PC-9 (cell line): ENCODE measurements at regions of chr2 and their contacts with region 1.

Region 1: GRCh38 chr2:113831161-113831560 is 58.7 kb upstream of the ACTR3 start:
- DNase-seq: peak; percentile 71 to 93
- H3K4me3 ChIP-seq: no peak overlapping the region
- H3K27ac ChIP-seq: peak overlapping the region; percentile 80
- H3K4me1 ChIP-seq: peaks cover 10% of the 10 kb centered on the region
- H3K27me3 ChIP-seq: no peaks in the 10 kb centered on the region
- CTCF ChIP-seq: no peak

Region 2: DNA sequence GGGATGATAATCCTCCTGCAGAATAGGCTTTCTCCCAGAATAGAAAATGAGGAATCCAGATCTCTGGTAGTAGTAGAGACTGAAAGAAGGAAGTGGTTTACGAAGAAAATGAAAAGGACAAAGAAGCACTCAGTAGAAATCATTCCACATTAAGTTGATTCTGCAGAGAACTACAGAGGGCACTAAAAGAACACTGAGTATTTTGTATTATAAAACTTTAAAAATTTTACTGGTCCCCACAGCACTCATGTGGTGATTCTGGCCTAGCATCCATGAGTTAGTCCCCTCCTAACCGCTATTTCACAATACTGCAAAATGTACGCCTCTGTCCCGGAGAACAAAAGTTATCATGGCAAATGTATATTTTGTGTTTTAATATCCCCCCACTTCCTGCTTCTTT is 31.8 kb before region 1 on chr2:
- CTCF ChIA-PET with region 1: no interaction called
- POLR2A ChIA-PET with region 1: interaction called, 13 read pairs
- intact Hi-C with region 1: no loop called
- DNase-seq: no peak
- H3K4me3 ChIP-seq: no peak overlapping the region
- H3K27ac ChIP-seq: no peak overlapping the region
- H3K4me1 ChIP-seq: no peaks in the 10 kb centered on the region
- H3K27me3 ChIP-seq: no peaks in the 10 kb centered on the region
- CTCF ChIP-seq: 0 out of 2 replicates have a peak, but pooled peaks have one; percentile 15

Region 3: DNA sequence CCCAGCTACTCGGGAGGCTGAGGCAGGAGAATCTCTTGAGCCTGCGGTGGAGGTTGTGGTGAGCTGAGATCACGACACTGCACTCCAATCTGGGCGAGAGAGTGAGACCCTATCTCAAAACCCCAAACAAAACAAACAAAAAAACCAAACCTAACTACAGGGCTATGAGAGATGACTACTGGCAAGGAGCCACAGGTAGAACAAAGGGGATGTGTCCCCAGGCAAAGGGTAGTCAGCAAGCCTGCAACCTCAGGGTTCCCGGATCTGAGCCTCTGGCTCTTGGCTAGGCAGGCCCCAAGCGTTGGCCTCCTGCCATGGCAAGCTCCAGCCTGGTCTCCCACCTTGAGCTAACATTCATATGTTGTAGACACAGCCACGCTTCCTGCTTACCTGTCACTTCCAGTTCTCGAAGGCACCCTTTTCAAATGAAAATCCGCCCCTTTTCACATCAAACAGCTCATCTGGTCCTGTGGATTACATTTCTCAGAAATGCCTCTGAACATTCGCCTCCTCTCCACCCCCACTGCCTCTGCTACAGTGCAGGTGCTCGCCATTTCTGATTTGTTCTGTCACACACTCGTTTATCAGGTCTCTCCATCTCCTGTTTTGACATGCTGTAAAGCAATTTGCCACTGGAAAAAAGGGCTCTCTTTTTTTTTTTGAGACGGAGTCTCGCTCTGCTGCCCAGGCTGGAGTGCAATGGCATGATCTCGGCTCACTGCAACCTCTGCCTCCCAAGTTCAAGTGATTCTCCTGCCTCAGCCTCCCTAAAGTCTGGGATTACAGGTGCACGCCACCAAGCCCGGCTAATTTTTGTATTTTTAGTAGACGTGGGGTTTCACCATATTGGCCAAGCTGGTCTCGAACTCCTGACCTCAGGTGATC is 45.6 kb after region 1 on chr2:
- CTCF ChIA-PET with region 1: no interaction called
- POLR2A ChIA-PET with region 1: no interaction called
- intact Hi-C with region 1: loop called (anchors 2 kb)
- DNase-seq: peak; percentile 94 to 95
- H3K4me3 ChIP-seq: no peak overlapping the region
- H3K27ac ChIP-seq: no peak overlapping the region
- H3K4me1 ChIP-seq: peaks cover 34% of the 10 kb centered on the region
- H3K27me3 ChIP-seq: no peaks in the 10 kb centered on the region
- CTCF ChIP-seq: no peak

Region 4: DNA sequence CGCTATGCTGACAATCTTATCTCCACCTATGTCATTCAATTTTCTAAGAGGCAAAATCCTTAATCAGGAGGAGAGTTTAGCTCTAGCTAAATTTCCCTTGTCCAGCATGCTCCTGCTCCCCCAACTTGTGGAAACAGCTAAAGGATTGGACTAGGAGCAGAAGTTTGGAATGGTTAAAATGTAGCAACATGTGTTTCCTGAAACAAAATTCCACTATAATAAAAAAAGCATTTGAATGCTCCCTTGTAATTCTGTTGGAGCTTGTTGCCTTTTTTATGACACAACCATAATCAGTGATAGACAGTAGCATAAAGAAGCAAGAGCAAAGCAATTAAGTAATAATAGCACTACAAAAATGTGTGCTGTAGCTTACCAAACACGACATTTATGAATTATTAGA is 65.6 kb after region 1 on chr2:
- CTCF ChIA-PET with region 1: no interaction called
- POLR2A ChIA-PET with region 1: interaction called, 12 read pairs
- intact Hi-C with region 1: loop called (anchors 1 kb)
- DNase-seq: no peak
- H3K4me3 ChIP-seq: no peak overlapping the region
- H3K27ac ChIP-seq: no peak overlapping the region
- H3K4me1 ChIP-seq: peaks cover 34% of the 10 kb centered on the region
- H3K27me3 ChIP-seq: no peaks in the 10 kb centered on the region
- CTCF ChIP-seq: no peak